ENCODE measurements at regions of chrX and their contacts with region 1.

Region 1: GRCh38 chrX:131778269-131779218 is 234.7 kb downstream of the OR13H1 start:
- DNase-seq: peak; percentile 82
- ATAC-seq: peak; percentile 89
- H3K4me3 ChIP-seq: peak overlapping the region; percentile 55; the same call in 1 of the 2 replicates
- H3K27ac ChIP-seq: peak overlapping the region; percentile 90
- H3K4me1 ChIP-seq: peaks cover 5% of the 10 kb centered on the region; the same call in 1 of the 2 replicates
- H3K27me3 ChIP-seq: no peaks in the 10 kb centered on the region; a peak in 1 of 4 replicates
- CTCF ChIP-seq: peak in 2 of 3 experiments; percentile 42 to 61; a peak in 3 of 6 replicates
- EP300 ChIP-seq: no peak
- POLR2A ChIP-seq: no peak
- RAD21 ChIP-seq: peak; percentile 71

Region 2: GRCh38 chrX:131741103-131741581 is 37.4 kb before region 1 on chrX:
- CTCF ChIA-PET with region 1: interaction called, 4 read pairs
- POLR2A ChIA-PET with region 1: no interaction called
- RAD21 ChIA-PET with region 1: interaction called, 6 read pairs
- SMC1A ChIA-PET with region 1: no interaction called
- in situ Hi-C with region 1: no loop called
- intact Hi-C with region 1: loop called (anchors 1 kb)
- DNase-seq: peak; percentile 87
- ATAC-seq: peak; percentile 83
- H3K4me3 ChIP-seq: peak overlapping the region; percentile 63
- H3K27ac ChIP-seq: peak overlapping the region; percentile 95
- H3K4me1 ChIP-seq: no peaks in the 10 kb centered on the region
- H3K27me3 ChIP-seq: no peaks in the 10 kb centered on the region
- CTCF ChIP-seq: peak; percentile 22 to 54 (median 43); a peak in 5 of 6 replicates
- EP300 ChIP-seq: no peak
- POLR2A ChIP-seq: 0 out of 2 replicates have a peak, but pooled peaks have one; percentile 28
- RAD21 ChIP-seq: peak; percentile 64

Region 3: GRCh38 chrX:131752489-131753198 is 25.9 kb before region 1 on chrX:
- CTCF ChIA-PET with region 1: no interaction called
- POLR2A ChIA-PET with region 1: no interaction called
- RAD21 ChIA-PET with region 1: interaction called, 6 read pairs
- SMC1A ChIA-PET with region 1: no interaction called
- in situ Hi-C with region 1: no loop called
- intact Hi-C with region 1: loop called (anchors 2 kb)
- DNase-seq: peak; percentile 87
- ATAC-seq: peak; percentile 82
- H3K4me3 ChIP-seq: peak overlapping the region; percentile 38; the same call in 1 of the 2 replicates
- H3K27ac ChIP-seq: peak overlapping the region; percentile 94
- H3K4me1 ChIP-seq: no peaks in the 10 kb centered on the region
- H3K27me3 ChIP-seq: no peaks in the 10 kb centered on the region
- CTCF ChIP-seq: peak; percentile 26 to 54 (median 36); a peak in 4 of 6 replicates
- EP300 ChIP-seq: no peak
- POLR2A ChIP-seq: no peak
- RAD21 ChIP-seq: peak; percentile 70

Region 4: DNA sequence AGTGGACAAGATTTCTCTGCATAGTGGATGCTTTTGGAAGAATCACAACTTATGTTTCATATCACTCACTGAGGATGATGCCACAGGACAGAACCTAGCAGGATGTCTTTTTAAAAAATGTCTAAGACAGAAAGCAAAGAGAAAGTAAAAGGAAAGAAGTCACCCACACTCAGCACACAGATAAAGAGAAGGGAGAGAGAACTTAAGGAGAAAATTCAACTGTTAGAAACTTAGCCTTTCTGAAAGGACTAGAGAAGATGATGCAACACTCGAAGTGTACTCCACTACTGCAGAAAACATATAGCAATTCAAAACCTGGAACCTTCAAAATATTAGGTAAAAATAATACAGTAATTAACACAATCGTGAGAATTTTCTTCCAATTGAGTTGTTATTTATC is 191.8 kb after region 1 on chrX:
- CTCF ChIA-PET with region 1: no interaction called
- POLR2A ChIA-PET with region 1: no interaction called
- RAD21 ChIA-PET with region 1: no interaction called
- SMC1A ChIA-PET with region 1: no interaction called
- in situ Hi-C with region 1: no loop called
- intact Hi-C with region 1: no loop called
- DNase-seq: no peak
- ATAC-seq: no peak
- H3K4me3 ChIP-seq: no peak overlapping the region
- H3K27ac ChIP-seq: no peak overlapping the region
- H3K4me1 ChIP-seq: no peaks in the 10 kb centered on the region
- H3K27me3 ChIP-seq: no peaks in the 10 kb centered on the region
- CTCF ChIP-seq: no peak
- EP300 ChIP-seq: no peak
- POLR2A ChIP-seq: no peak
- RAD21 ChIP-seq: no peak